T-cell (primary cell): ENCODE measurements at regions of chr14 and their contacts with region 1.

Region 1: GRCh38 chr14:89477391-89477790 is 60.4 kb upstream of the FOXN3 start:
- DNase-seq: no peak
- ATAC-seq: no peak
- H3K4me3 ChIP-seq: no peak overlapping the region
- H3K4me3 Mint-ChIP-seq: no peak overlapping the region
- H3K27ac ChIP-seq: no peak overlapping the region
- H3K27ac Mint-ChIP-seq: peak overlapping the region in 1 of 2 donors; percentile 9
- H3K4me1 ChIP-seq: peaks cover 0 to 2% of the 10 kb centered on the region in 2 experiments
- H3K4me1 Mint-ChIP-seq: peaks cover 21 to 35% (median 31%) of the 10 kb centered on the region in 3 donors
- H3K27me3 ChIP-seq: no peaks in the 10 kb centered on the region
- H3K27me3 Mint-ChIP-seq: no peaks in the 10 kb centered on the region

Region 2: DNA sequence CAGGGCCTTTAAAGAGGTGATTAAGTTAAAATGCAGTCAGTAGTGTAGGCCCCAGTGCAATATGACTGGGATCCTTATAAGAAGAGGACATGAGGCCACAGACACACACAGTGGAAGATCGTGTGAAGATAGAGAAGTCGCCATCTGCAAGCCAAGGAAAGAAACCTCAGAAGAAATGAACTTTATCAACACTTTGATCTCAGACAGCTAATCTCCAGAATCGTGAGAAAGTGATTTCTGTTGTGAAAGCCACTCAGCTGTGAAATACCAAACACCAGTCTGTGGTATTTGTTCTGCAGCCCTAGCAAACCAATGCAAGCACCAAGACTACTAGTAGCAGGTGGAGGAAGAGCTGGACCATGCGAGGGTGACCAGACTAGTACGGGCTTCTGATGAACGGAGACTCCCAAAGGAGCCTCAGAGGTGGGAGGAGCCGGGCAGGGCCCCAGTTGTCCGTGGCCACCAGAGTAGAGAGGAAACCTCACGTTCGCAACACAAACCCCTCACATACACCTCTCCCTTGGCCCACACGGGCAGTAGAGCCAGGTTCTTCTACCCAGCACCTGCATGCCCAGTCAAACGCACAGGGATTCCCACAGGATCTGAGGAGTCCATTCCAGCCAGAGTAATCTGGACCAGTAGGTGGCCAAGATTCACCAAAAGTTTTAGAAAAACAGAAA is 410.0 kb before region 1 on chr14:
- CTCF ChIA-PET with region 1: no interaction called
- POLR2A ChIA-PET with region 1: no interaction called
- DNase-seq: peak in 5 of 35 experiments; percentile 0 to 50 (median 3)
- ATAC-seq: peak in 2 of 4 experiments; percentile 55 to 57
- H3K4me3 ChIP-seq: no peak overlapping the region
- H3K4me3 Mint-ChIP-seq: peak overlapping the region; percentile 1 to 37 (median 25)
- H3K27ac ChIP-seq: no peak overlapping the region
- H3K27ac Mint-ChIP-seq: peak overlapping the region in 1 of 2 donors; percentile 53
- H3K4me1 ChIP-seq: peaks cover 0 to 12% of the 10 kb centered on the region in 2 experiments
- H3K4me1 Mint-ChIP-seq: peaks cover 14 to 16% (median 15%) of the 10 kb centered on the region in 3 donors
- H3K27me3 ChIP-seq: peaks cover 0 to 23% of the 10 kb centered on the region in 2 experiments
- H3K27me3 Mint-ChIP-seq: peaks cover 11 to 16% of the 10 kb centered on the region in 2 donors

Region 3: GRCh38 chr14:89702073-89702875 is 224.9 kb after region 1 on chr14:
- CTCF ChIA-PET with region 1: no interaction called
- POLR2A ChIA-PET with region 1: interaction called in 1 of 2 experiments, 11 read pairs
- DNase-seq: no peak
- ATAC-seq: peak in 1 of 4 experiments; percentile 5
- H3K4me3 ChIP-seq: peak overlapping the region; percentile 29 to 54
- H3K4me3 Mint-ChIP-seq: peak overlapping the region; percentile 76 to 82 (median 76)
- H3K27ac ChIP-seq: peak overlapping the region; percentile 58
- H3K27ac Mint-ChIP-seq: peak overlapping the region; percentile 82 to 91
- H3K4me1 ChIP-seq: peaks cover 30 to 35% of the 10 kb centered on the region in 2 experiments
- H3K4me1 Mint-ChIP-seq: peaks cover 42 to 50% (median 49%) of the 10 kb centered on the region in 3 donors
- H3K27me3 ChIP-seq: no peaks in the 10 kb centered on the region
- H3K27me3 Mint-ChIP-seq: no peaks in the 10 kb centered on the region